ENCODE measurements at regions of chr14 and their contacts with region 1.

Region 1: GRCh38 chr14:94850310-94851211 is 80.6 kb upstream of the GSC start:
- DNase-seq: no peak
- H3K4me3 ChIP-seq: no peak overlapping the region
- H3K27ac ChIP-seq: no peak overlapping the region
- H3K4me1 ChIP-seq: peaks cover 0 to 3% of the 10 kb centered on the region in 2 experiments; a peak in 1 of 4 replicates
- H3K27me3 ChIP-seq: no peaks in the 10 kb centered on the region
- CTCF ChIP-seq: no peak
- EP300 ChIP-seq: no peak
- RAD21 ChIP-seq: no peak

Region 2: DNA sequence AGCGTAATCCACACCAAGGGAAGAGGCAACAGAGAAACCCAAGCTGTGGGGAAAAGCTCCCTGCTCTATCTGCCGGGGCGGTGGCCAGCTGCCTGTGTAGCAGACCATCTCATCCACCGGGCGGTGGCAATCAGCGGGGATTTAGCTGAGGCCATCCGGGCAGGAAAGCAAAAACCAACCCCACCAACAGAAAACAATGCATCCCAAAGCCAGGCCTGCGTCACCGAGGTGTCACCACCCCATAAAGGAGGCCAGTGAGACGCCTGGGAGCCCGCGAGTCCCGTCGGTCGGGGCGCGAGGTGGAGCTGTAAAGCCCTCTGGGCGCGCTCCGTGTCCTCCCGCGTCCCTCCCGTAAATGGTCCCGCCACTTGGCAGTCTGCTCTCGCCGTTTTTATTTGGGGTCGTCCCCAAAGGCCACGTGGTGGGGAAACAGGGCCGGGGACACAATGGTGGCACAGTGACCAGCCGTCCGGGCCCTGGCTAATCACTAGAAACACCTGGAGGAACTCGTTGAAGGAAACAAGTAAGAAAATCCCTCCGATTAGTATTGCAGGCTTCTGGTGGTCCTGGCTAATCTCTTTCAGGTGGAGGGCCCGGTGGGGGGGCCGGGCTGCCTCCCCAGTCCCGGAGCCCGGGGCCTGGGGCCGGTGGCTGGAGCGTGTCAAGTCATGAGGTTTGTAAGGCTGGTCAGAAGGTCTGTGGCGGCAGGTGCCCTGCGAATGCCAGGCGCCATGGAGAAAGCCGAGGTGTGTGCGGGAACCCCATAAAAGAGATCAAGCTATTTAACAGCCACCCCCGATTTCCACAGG is 14.0 kb after region 1 on chr14:
- CTCF ChIA-PET with region 1: interaction called, 11 read pairs
- POLR2A ChIA-PET with region 1: no interaction called
- DNase-seq: no peak
- H3K4me3 ChIP-seq: no peak overlapping the region
- H3K27ac ChIP-seq: no peak overlapping the region
- H3K4me1 ChIP-seq: 0 out of 4 replicates have a peak, but pooled peaks cover 0 to 3% of the 10 kb centered on the region in 2 experiments
- H3K27me3 ChIP-seq: no peaks in the 10 kb centered on the region; the same call in 1 of the 2 replicates
- CTCF ChIP-seq: no peak
- EP300 ChIP-seq: no peak
- RAD21 ChIP-seq: no peak

Measured in SK-N-SH (cell line).